Naive thymus-derived CD4-positive, alpha-beta T cell (primary cell): ENCODE measurements at regions of chr19 and their contacts with region 1.

Region 1: DNA sequence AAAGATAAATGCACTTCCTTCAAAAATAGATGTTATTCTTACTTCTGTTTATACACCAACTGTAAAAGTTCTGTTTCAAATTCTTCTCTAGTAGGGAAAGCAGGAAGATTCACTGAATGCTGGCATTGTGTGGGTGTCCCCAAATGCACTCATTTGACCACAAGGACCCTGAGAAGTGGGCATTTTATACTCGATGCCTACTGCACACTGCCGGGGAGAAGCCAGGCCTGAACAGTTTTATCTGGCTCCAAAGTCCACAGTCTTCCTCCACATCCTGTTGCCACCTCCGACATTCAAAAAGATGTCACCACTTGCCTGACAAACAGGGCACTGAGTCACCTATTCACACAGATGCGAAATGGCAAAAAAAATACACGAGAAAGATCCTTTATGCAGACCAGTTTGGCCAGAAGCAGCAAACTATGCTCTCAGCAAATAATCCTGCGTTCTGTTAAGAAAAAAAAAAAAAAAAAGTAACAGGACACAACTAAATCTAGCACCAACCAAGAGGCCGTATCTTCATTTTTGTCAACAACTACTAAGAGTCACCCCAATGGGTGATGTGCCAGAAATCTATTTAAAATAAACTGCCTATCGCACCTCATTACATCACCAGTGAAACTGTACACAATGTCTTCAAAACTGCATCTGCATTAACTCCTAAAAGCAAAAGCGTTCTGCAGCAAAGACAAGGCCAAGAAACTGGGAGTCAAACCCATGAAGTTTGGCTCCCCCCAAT is 6.2 kb downstream of the ZC3H4 start:
- DNase-seq: peak in 4 of 9 donors; percentile 19 to 21 (median 20)
- ATAC-seq: no peak
- H3K4me3 ChIP-seq: peak overlapping the region; percentile 15
- H3K4me3 Mint-ChIP-seq: peak overlapping the region; percentile 43 to 100 (median 72)
- H3K27ac ChIP-seq: peak overlapping the region; percentile 99
- H3K27ac Mint-ChIP-seq: peak overlapping the region; percentile 20 to 100 (median 99)
- H3K4me1 ChIP-seq: peaks cover 41 to 47% of the 10 kb centered on the region in 2 donors
- H3K4me1 Mint-ChIP-seq: peaks cover 40 to 76% (median 65%) of the 10 kb centered on the region in 7 donors
- H3K27me3 ChIP-seq: no peaks in the 10 kb centered on the region
- H3K27me3 Mint-ChIP-seq: peaks cover 0 to 2% (median 0%) of the 10 kb centered on the region in 5 donors

Region 2: GRCh38 chr19:47094557-47095475 is 12.6 kb before region 1 on chr19:
- CTCF ChIA-PET with region 1: no interaction called
- POLR2A ChIA-PET with region 1: interaction called, 184 read pairs
- intact Hi-C with region 1: loop called (anchors 1 kb)
- DNase-seq: peak in 5 of 9 donors; percentile 15 to 67 (median 23)
- ATAC-seq: peak; percentile 74
- H3K4me3 ChIP-seq: peak overlapping the region; percentile 28
- H3K4me3 Mint-ChIP-seq: peak overlapping the region in 8 of 10 donors; percentile 16 to 93 (median 62)
- H3K27ac ChIP-seq: peak overlapping the region; percentile 64
- H3K27ac Mint-ChIP-seq: peak overlapping the region; percentile 82 to 99 (median 92)
- H3K4me1 ChIP-seq: peaks cover 19 to 21% of the 10 kb centered on the region in 2 donors
- H3K4me1 Mint-ChIP-seq: peaks cover 36 to 77% (median 43%) of the 10 kb centered on the region in 7 donors
- H3K27me3 ChIP-seq: no peaks in the 10 kb centered on the region
- H3K27me3 Mint-ChIP-seq: no peaks in the 10 kb centered on the region